CD8-positive, alpha-beta T cell (primary cell): ENCODE measurements at regions of chr2 and their contacts with region 1.

Region 1: DNA sequence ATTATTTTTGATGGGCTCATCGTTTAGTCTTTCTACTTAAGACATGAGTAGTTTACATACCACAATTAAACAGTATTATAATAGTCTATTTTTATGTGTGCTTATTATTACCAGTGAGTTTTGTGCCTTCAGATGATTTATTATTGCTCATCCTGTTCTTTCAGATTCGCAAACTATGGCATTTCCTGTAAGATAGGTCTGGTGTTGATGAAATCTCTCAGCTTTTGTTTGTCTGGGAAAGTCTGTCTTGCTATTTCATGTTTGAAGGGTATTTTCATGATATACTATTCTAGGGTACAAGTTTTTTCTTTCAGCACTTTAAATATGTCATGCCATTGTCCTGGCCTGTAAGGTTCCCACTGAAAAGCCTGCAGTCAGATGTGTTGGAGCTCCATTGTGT is 101.3 kb downstream of the DNAH7 start:
- DNase-seq: no peak
- ATAC-seq: no peak
- H3K4me3 ChIP-seq: no peak overlapping the region
- H3K4me3 Mint-ChIP-seq: no peak overlapping the region
- H3K27ac ChIP-seq: no peak overlapping the region
- H3K27ac Mint-ChIP-seq: no peak overlapping the region
- H3K4me1 ChIP-seq: no peaks in the 10 kb centered on the region
- H3K4me1 Mint-ChIP-seq: no peaks in the 10 kb centered on the region
- H3K27me3 ChIP-seq: no peaks in the 10 kb centered on the region
- H3K27me3 Mint-ChIP-seq: peaks cover 9% of the 10 kb centered on the region
- CTCF ChIP-seq: no peak

Region 2: DNA sequence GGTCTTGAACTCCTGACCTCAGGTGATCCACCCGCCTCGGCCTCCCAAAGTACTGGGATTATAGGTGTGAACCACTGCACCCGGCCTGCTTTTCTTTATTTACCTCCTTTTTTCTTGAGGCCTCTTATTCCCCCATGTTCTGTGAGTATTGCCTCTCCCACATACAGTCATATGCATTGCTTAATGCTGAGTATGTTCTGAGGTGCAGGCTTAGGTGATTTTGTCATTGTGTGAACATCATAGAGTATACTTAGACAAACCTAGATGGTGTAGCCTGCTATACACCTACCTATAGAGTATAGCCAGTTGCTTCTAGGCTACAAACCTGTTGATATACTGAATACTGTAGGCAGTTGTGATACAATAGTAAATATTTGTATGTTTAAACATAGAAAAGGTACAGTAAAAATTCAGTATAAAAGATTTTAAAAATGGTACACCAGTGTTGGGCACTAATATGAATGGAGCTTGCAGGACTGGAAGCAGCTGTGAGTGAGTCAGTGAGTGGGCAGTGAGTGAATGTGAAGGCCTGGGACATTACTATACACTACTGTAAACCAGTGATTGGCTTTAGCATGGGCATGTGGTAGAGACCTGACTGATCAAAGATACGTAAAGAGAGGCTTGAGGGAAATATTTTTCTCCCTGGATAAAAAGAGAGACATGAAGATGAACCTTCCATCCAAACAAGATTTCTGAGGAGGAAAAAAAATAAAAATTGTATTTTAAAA is 292.7 kb before region 1 on chr2:
- CTCF ChIA-PET with region 1: no interaction called
- POLR2A ChIA-PET with region 1: no interaction called
- intact Hi-C with region 1: loop called in 1 of 2 experiments (anchors 5 kb)
- DNase-seq: no peak
- ATAC-seq: no peak
- H3K4me3 ChIP-seq: no peak overlapping the region
- H3K4me3 Mint-ChIP-seq: no peak overlapping the region
- H3K27ac ChIP-seq: no peak overlapping the region
- H3K27ac Mint-ChIP-seq: no peak overlapping the region
- H3K4me1 ChIP-seq: peaks cover 14% of the 10 kb centered on the region
- H3K4me1 Mint-ChIP-seq: peaks cover 57% of the 10 kb centered on the region
- H3K27me3 ChIP-seq: no peaks in the 10 kb centered on the region
- H3K27me3 Mint-ChIP-seq: no peaks in the 10 kb centered on the region
- CTCF ChIP-seq: no peak

Region 3: GRCh38 chr2:195956725-195957124 is 10.6 kb before region 1 on chr2:
- CTCF ChIA-PET with region 1: no interaction called
- POLR2A ChIA-PET with region 1: no interaction called
- intact Hi-C with region 1: no loop called
- DNase-seq: no peak
- ATAC-seq: no peak
- H3K4me3 ChIP-seq: no peak overlapping the region
- H3K4me3 Mint-ChIP-seq: no peak overlapping the region
- H3K27ac ChIP-seq: no peak overlapping the region
- H3K27ac Mint-ChIP-seq: no peak overlapping the region
- H3K4me1 ChIP-seq: no peaks in the 10 kb centered on the region
- H3K4me1 Mint-ChIP-seq: no peaks in the 10 kb centered on the region
- H3K27me3 ChIP-seq: no peaks in the 10 kb centered on the region
- H3K27me3 Mint-ChIP-seq: no peaks in the 10 kb centered on the region
- CTCF ChIP-seq: no peak

Region 4: GRCh38 chr2:196036442-196036841 is 69.1 kb after region 1 on chr2:
- CTCF ChIA-PET with region 1: no interaction called
- POLR2A ChIA-PET with region 1: no interaction called
- intact Hi-C with region 1: no loop called
- DNase-seq: no peak
- ATAC-seq: no peak
- H3K4me3 ChIP-seq: no peak overlapping the region
- H3K4me3 Mint-ChIP-seq: no peak overlapping the region
- H3K27ac ChIP-seq: no peak overlapping the region
- H3K27ac Mint-ChIP-seq: no peak overlapping the region
- H3K4me1 ChIP-seq: no peaks in the 10 kb centered on the region
- H3K4me1 Mint-ChIP-seq: no peaks in the 10 kb centered on the region
- H3K27me3 ChIP-seq: no peaks in the 10 kb centered on the region
- H3K27me3 Mint-ChIP-seq: peaks cover 6% of the 10 kb centered on the region
- CTCF ChIP-seq: no peak

Region 5: GRCh38 chr2:196939187-196939770 is 971.9 kb after region 1 on chr2:
- CTCF ChIA-PET with region 1: no interaction called
- POLR2A ChIA-PET with region 1: no interaction called
- intact Hi-C with region 1: no loop called
- DNase-seq: no peak
- ATAC-seq: no peak
- H3K4me3 ChIP-seq: no peak overlapping the region
- H3K4me3 Mint-ChIP-seq: no peak overlapping the region
- H3K27ac ChIP-seq: no peak overlapping the region
- H3K27ac Mint-ChIP-seq: no peak overlapping the region
- H3K4me1 ChIP-seq: no peaks in the 10 kb centered on the region
- H3K4me1 Mint-ChIP-seq: no peaks in the 10 kb centered on the region
- H3K27me3 ChIP-seq: no peaks in the 10 kb centered on the region
- H3K27me3 Mint-ChIP-seq: peaks cover 9% of the 10 kb centered on the region
- CTCF ChIP-seq: no peak